ENCODE measurements at regions of chr1 and their contacts with region 1.

Region 1: DNA sequence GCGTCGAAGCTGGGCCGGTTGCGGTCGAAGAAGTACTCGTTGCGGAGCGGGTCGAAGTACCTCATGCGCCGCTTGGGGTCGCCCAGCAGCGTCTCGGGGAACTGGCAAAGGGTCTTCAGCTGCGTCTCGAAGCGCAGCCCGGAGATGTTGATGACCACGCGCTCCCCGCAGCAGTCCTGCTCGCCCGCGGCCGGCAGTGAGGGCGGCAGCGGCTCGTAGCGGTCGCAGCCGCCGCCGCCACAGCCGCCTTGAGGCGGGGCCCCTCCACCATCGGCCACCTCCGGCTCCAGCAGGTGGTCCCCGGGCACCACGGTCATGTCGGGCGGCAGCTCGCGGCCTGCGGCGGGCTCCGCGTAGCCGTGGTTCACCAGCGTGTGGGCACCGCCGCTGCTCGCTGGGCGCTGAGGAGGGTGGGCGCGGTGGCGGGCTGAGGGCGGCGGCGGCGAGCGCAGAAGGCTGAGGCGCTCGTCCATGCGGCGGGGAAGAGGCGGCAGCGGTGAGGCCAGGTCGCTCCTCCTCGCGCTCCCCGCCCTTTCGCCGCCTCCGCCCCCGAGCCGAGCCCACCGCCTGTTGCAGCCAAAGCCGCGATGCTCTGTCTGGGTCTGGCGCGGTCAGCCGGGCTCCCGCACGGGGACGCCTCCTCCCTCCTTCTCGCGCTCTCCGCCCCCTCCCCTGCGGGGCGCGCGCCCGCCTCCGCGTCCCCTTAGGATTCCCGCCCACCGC is at the start of gene KCNA3:
- DNase-seq: peak; percentile 68
- H3K4me3 Mint-ChIP-seq: peak within 1 kb of the TSS; percentile 100
- H3K27ac Mint-ChIP-seq: peak within 1 kb of the TSS; percentile 92
- H3K4me1 Mint-ChIP-seq: peaks cover 67% of the 10 kb centered on the region
- H3K27me3 Mint-ChIP-seq: no peaks in the 10 kb centered on the region
- total RNA-seq, gene KCNA3: 38.1 and 42.2 TPM in 2 replicates

Region 2: GRCh38 chr1:110235834-110236682 is 438.4 kb before region 1 on chr1:
- intact Hi-C with region 1: loop called (anchors 1 kb)
- DNase-seq: no peak
- H3K4me3 Mint-ChIP-seq: no peak overlapping the region
- H3K27ac Mint-ChIP-seq: peak overlapping the region; percentile 80
- H3K4me1 Mint-ChIP-seq: peaks cover 51% of the 10 kb centered on the region
- H3K27me3 Mint-ChIP-seq: no peaks in the 10 kb centered on the region

Region 3: DNA sequence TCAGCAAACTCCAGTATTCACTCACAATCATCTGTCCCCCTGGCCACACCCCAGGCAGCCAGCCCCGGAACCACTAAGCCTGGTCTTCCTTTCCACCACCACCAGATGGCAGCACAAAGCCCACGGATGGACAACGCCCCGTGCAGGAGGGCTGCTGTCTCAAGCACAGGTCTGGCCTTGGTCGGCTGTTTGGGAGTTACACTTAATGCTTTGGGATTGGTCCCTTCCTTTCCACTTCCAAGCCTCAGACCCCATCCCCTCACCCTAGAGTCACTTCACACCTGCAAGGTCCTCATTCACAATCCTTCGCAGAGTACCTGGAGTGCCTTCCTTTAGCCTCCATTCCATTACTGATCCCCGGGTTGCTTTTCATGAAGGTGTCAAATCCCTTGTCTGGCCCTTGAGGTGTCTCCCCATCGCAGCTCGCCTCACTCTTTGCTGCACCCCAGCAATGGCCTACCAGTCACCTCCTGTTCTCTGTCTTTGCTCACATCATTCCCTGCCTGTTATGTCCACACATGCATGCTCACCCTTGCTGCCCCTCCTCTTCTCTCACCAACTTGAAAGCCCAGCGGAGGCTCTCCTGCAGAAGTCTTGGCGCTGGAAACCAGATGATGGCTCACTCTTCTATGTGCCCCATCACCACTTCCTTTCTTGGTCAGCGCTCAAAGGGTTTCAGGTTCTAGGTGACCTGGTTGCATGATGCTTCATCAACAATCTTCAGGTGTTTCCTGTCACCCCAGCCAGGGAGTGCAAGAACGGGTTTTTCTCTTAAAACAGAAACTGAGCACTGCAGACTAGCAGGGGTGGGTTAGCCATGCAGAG is 43.4 kb before region 1 on chr1:
- intact Hi-C with region 1: loop called (anchors 1 kb)
- DNase-seq: peak; percentile 84
- H3K4me3 Mint-ChIP-seq: no peak overlapping the region
- H3K27ac Mint-ChIP-seq: no peak overlapping the region
- H3K4me1 Mint-ChIP-seq: peaks cover 67% of the 10 kb centered on the region
- H3K27me3 Mint-ChIP-seq: no peaks in the 10 kb centered on the region

Region 4: GRCh38 chr1:110726755-110727154 is 52.3 kb after region 1 on chr1:
- intact Hi-C with region 1: loop called (anchors 5 kb)
- DNase-seq: no peak
- H3K4me3 Mint-ChIP-seq: peak overlapping the region; percentile 67
- H3K27ac Mint-ChIP-seq: peak overlapping the region; percentile 8
- H3K4me1 Mint-ChIP-seq: peaks cover 31% of the 10 kb centered on the region
- H3K27me3 Mint-ChIP-seq: no peaks in the 10 kb centered on the region

Region 5: DNA sequence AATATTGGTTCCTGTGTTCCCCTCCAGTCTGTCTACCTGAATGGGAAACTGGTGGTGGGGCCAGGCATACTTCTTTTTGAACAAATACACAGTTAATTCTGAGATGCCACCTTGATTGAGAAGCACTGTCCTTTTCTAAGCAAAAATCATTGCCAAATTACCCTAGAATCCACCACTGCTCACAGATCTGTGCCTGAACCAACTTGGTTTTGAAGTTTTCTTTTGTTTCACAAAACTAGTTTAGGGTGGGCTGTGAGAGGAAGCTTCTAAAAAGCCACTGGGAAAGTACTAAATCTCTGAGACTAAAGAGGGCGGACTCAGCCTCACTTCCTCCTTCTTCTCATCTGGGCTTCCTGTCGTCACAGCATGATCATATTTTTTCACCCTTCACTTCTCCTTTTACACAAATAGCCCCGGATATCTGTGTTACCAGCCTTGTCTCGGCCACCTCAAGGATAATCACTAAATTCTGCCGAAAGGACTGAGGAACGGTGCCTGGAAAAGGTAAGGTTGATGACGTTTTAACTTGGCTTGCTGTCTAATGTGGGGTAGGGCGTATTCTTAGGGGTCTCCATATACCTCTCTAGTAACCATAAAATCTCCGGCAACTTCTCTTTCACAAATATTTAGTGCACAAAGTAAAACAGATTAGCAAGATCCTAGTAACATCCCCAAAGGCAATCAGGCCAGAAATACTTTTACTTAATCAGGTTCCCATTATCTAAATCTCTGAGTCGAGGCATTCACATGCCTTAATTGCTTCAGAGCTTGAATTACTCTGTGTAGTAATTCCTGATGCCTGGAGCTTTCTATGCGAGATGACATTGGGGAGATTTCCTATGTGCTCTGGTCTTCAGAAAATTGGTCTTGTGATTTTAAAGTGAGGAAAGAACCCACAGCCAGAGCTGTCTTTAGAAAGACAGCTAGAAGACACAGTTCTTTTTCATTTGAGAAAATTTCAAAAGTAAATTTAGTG is 198.5 kb after region 1 on chr1 and contains the start of gene CD53:
- intact Hi-C with region 1: loop called (anchors 1 kb)
- DNase-seq: peak; percentile 47
- H3K4me3 Mint-ChIP-seq: peak within 1 kb of the TSS; percentile 99
- H3K27ac Mint-ChIP-seq: peak within 1 kb of the TSS; percentile 98
- H3K4me1 Mint-ChIP-seq: peaks cover 49% of the 10 kb centered on the region
- H3K27me3 Mint-ChIP-seq: no peaks in the 10 kb centered on the region
- total RNA-seq, gene CD53: 201 and 204 TPM in 2 replicates

Region 6: DNA sequence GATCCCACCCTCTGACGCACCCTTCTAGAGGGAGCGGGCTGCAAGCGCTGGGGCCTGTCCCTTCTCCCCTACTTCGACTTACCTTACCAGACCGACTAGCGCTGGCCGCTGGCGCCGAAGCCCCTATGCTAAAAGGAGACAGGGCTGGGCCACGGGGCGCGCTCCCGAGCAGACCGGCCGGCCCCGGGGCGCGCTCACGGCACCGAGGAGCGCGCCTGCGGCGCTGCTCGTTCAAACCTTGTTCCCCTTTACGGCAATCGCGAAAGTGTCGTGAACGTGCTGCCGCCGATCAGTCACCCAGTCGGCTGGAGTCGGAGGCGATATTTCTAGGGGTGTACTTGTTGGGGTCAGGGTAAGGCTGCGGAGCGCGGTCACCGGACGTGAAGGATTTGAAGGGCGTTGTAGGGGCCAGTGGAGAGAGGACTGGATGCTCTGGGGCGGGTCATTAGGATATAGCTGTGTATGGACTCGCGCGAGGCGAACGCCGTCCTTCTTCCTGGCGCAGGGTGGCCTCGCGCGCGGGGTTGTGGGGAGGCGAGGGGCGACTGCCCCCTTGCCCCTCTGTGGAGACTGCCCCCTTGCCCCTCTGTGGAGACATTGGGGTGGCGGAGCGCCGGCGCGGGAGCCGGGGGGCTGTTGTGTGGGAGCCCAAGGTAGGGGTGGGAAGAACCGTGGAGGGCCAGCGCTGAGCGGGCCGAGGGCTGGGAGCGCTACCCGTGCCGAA is 465.6 kb after region 1 on chr1 and contains the starts of genes CEPT1 and DRAM2:
- intact Hi-C with region 1: loop called (anchors 5 kb)
- DNase-seq: peak; percentile 89
- H3K4me3 Mint-ChIP-seq: peak within 1 kb of the TSS; percentile 100
- H3K27ac Mint-ChIP-seq: peak within 1 kb of the TSS; percentile 100
- H3K4me1 Mint-ChIP-seq: peaks cover 40% of the 10 kb centered on the region
- H3K27me3 Mint-ChIP-seq: no peaks in the 10 kb centered on the region
- total RNA-seq, gene CEPT1: 32.5 and 37.3 TPM in 2 replicates
- total RNA-seq, gene DRAM2: 24.0 and 26.6 TPM in 2 replicates

Measured in activated T-helper 1 cell treated with anti-CD3 and anti-CD28 coated beads, Interleukin-12 subunit alpha, Interleukin-12 subunit beta, Interleukin-2, Interleukin-4 antibody, amounts not matched to agents 30 ng/mL and 10 ng/mL and 1 ng/mL, durations not matched to agents 14 hours and 24 hours and 36 hours (primary cell).